ENCODE measurements at regions of chr5 and their contacts with region 1.

Region 1: DNA sequence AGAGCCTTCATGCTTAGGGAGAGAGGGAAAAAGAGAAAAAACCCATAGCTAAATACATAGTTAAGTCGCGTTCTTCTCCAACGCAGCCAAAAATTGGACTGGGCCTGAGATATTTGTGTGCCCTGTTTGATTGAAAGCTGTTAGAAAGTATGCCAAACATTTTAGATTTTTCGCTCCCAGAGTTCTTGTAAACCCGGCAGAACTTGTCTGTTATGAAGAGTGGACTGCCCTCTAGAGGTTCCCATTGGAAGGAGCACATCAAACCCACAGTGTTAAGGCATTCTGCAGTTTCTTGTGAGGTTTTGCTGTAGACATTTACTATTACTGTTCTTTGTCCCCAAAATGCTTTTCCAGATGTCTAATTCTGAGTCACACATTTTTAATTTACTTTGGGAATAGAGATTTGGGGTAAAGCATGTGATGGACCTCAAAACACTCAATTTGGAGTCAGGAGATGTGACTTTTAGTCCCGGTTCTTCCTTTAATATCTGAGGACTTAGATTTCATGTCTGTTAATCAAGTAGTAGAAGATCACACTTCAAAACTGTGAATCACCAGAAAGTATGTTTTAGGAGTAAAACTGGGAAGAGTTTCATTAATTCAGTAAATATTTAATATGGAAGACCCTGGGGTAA is 96.6 kb downstream of the PCSK1 start:
- DNase-seq: peak in 1 of 3 donors; percentile 93
- ATAC-seq: peak; percentile 81
- H3K4me3 ChIP-seq: no peak overlapping the region
- H3K4me1 ChIP-seq: peaks cover under 1% of the 10 kb centered on the region
- CTCF ChIP-seq: peak; percentile 67

Region 2: DNA sequence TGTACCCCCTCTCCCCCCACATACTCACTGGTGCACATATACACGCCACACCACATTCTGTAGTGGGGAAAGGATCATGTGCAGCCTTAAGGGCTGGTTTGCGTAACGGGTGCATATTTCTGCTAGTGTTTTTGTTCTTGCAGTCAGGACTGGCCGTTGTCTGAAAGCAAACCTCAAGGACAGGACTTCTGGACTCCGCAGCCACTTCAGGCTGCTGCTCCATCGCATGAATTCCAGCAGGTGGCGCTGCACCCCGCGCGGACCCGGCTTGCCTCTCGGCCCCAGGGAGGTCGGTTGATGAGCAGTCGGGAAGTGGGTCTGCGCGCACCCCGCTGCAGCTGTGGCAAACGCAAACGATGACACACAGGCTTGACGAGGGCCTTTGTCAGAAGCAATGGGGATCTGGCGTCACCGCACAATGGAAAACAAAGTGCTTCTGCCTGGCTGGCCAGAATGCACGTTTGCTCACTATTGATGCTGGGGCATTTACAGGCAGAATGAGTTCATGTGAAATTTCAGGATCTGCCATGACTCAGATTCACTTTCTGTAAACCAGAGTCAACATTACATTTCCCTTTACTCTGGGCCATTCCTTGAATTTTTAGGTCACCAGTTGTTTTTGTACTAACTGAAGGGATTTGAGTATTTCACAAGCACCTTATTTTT is 477.7 kb before region 1 on chr5:
- intact Hi-C with region 1: loop called in 1 of 2 experiments (anchors 5 kb)
- DNase-seq: peak; percentile 80 to 92 (median 91)
- ATAC-seq: peak; percentile 93
- H3K4me3 ChIP-seq: no peak overlapping the region
- H3K4me1 ChIP-seq: no peaks in the 10 kb centered on the region
- CTCF ChIP-seq: peak; percentile 94

Region 3: DNA sequence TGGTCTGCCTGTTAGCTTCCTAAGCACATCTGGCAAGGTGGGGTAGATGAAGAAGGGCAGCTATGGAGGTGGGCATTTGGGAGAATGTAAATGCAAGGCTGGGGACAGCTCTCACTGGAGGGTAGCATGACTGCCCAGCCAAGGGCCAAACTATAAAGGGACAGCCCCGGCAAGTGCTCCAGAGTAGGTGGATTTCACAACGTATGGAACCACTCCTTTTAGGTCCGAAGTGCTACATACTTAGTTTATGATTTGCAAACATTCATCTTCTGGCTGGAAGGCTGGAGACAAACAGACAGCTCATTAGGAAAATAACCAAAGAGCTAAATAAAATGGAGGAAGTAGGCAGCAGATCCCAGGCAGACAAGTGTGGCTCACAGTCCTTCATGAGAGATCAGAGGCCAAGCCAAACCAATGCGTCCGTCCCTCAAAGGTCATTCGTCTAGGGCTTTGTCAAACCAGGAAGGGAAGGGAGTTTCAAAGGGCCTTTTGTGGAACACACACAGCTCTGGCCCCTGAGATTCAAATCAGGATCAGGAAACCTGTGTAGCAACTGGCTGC is 471.4 kb before region 1 on chr5:
- intact Hi-C with region 1: loop called in 1 of 2 experiments (anchors 5 kb)
- DNase-seq: peak in 2 of 3 donors; percentile 54 to 58
- ATAC-seq: peak; percentile 94
- H3K4me3 ChIP-seq: no peak overlapping the region
- H3K4me1 ChIP-seq: peaks cover 7% of the 10 kb centered on the region
- CTCF ChIP-seq: no peak

Region 4: DNA sequence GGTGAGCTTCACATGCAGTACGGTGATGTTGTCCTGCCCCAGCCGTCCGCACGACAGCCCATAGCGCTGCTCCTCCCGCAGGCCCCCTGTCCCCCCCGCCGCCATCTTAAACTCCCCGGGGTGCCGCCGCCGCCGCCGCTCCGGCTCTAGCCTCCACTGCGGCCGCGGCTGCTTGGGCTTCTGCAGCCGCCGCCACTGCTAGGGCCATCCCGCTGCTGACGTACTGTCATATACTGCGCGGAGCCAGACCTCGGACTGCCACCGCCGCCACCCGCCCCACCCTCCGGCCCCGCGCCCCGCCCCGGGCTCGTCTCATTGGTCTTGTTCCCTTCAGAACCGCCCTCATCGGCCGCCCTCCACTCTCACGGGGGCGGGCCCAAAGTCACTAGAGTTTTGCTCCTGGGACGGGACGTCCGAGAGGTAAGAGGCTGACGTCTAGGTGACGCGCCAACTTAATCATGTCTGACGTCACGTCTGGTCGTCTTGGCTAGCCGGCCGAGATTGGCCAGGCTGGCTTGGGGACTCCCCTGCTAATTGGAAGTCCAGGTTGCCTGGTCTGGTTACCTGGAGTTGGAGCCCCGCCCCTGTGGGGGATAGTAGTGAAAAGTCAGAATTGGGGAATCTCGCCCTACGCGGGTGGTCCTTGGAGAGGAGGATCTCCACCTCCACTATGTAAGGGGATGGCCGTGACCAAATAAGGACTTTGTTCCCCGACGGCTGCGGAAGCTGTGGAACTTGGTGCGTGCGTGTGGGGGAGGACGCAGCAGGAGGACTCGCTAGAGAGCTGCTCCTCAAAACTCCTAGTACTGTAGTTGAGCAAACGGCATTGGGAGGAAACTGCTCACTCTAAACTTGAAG is 374.6 kb before region 1 on chr5 and contains the start of gene ELL2:
- intact Hi-C with region 1: loop called in 1 of 2 experiments (anchors 10 kb)
- DNase-seq: peak; percentile 99
- ATAC-seq: peak; percentile 88
- H3K4me3 ChIP-seq: peak within 1 kb of the TSS; percentile 88
- H3K4me1 ChIP-seq: peaks cover 17% of the 10 kb centered on the region
- CTCF ChIP-seq: no peak
- total RNA-seq, gene ELL2: 26.9 to 42.7 (median 31.7) TPM

Region 5: GRCh38 chr5:96101358-96102089 is 234.9 kb before region 1 on chr5:
- intact Hi-C with region 1: no loop called
- DNase-seq: no peak
- ATAC-seq: no peak
- H3K4me3 ChIP-seq: no peak overlapping the region
- H3K4me1 ChIP-seq: no peaks in the 10 kb centered on the region
- CTCF ChIP-seq: no peak